Spleen (tissue), 13 donors: ENCODE measurements at regions of chr6 and their contacts with region 1.

Region 1: DNA sequence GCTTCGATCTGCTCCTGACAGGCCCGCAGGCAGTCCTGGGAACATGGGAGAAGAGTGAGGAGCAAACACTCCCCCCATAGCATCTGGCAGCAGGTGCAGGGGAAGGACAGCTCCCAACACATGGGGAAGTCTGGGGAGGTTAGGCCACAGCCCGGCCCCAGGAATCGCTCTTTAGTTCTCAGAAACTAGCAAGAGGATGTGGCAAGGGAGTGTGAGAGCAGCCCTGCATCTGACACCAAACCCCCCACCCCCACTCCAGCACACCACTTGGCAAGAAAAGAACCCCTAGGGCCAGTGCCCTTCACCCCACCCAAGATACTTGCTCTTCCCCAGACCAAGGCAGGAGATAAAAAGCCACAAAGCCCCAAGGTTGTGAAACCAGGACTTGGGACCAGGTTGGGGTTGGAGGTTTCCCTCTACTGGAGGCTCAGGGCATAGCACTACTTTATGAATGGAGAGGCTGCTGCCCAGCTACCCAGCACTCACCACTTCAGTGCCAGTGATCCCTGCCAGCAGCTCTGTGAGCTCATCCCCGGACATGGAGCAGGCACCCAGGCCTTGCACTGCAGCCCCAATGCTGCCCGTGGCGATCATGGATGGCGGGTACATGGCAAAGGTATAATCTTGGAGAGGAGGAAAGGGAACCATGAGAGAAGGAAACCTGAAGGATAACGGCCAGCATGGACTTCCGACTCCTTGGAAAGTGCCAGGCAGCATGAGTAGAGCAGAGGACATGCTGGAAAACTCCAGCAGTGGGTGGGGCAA is 5.4 kb downstream of the CCND3 start:
- DNase-seq: peak; percentile 86
- H3K4me3 ChIP-seq: peak overlapping the region in 3 of 8 donors; percentile 3 to 98 (median 9)
- H3K27ac ChIP-seq: peak overlapping the region; percentile 57 to 96 (median 91)
- H3K4me1 ChIP-seq: peaks cover 55 to 78% (median 71%) of the 10 kb centered on the region in 6 donors
- H3K27me3 ChIP-seq: no peaks in the 10 kb centered on the region
- CTCF ChIP-seq: peak; percentile 77 to 91 (median 84)
- POLR2A ChIP-seq: no peak

Region 2: DNA sequence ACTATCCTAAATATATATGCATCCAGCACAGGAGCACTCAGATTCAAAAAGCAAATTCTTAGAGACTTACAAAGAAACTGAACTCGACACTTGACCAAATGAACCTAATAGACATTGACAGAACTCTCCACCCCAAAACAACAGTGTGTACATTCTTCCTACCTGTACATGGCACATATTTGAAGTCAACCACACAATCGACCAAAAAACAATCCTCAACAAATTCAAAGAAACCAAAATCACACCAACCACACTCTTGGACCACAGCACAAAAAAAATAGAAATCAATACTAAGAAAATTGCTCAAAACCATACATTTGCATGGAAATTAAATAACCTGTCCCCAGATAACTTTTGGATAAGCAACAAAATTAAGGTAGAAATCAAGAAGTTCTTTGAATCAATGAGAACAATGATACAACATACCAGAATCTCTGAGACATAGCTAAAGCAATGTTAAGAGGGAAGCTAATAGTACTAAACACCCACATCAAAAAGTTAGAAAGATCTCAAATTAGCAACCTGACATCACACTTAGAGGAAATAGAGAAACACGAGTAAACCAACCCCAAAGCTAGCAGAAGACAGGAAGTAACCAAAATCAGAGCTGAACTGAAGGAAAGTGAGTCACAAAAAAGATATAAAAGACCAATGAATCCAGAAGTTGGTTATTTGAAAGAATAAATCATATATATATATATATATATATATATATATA is 637.3 kb before region 1 on chr6:
- intact Hi-C with region 1: no loop called
- DNase-seq: no peak
- H3K4me3 ChIP-seq: no peak overlapping the region
- H3K27ac ChIP-seq: peak overlapping the region in 6 of 8 donors; percentile 29 to 60 (median 47)
- H3K4me1 ChIP-seq: peaks cover 0 to 26% (median 8%) of the 10 kb centered on the region in 6 donors
- H3K27me3 ChIP-seq: no peaks in the 10 kb centered on the region
- CTCF ChIP-seq: no peak
- POLR2A ChIP-seq: no peak

Region 3: DNA sequence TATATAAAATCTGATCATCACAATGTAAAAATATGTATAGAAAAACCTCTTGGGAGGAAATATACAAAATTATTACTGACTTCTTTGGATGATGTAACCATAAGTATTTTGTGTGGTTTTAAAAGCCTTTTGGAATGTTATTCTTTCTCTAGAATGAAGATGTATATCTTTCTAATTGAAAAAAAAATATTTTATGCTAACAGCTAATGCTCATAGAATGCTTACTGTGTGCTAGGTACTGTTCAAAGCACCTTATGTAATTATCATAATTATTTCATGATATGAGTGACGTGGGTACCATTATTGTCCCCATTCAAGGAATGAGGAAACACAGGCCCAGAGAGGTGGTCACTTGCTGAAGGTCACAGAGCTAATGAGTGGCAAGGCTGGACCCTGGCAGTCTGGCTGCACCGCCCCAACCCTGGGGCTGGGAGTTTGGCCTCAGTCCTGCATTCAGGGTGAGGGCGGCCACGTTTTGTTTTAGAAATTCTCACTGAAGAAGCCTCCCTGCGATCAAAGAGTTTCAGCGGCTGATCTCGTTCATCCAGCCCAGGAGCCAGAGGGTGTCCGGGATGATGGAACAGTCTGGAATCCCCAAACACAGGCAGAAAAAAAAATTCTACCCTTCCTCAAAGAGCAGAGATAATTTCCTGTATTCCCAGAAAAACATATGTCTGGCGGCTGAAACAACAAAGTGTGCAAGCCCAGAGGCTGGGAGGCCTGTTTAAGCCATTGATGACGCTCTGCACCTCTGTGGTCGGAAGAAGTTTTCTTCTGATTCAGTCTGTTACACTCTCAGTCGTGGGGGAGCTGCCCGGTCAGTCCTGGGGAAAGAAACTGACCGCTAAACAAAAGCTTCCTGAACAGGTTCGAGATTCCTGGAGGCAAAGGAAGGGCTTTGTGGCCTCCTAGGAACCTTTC is 238.1 kb before region 1 on chr6:
- intact Hi-C with region 1: no loop called
- DNase-seq: no peak
- H3K4me3 ChIP-seq: no peak overlapping the region
- H3K27ac ChIP-seq: peak overlapping the region in 7 of 8 donors; percentile 29 to 75 (median 53)
- H3K4me1 ChIP-seq: peaks cover 14 to 94% (median 62%) of the 10 kb centered on the region in 6 donors
- H3K27me3 ChIP-seq: no peaks in the 10 kb centered on the region
- CTCF ChIP-seq: no peak
- POLR2A ChIP-seq: no peak

Region 4: GRCh38 chr6:42043787-42044475 is 107.7 kb after region 1 on chr6:
- intact Hi-C with region 1: loop called (anchors 5 kb)
- DNase-seq: peak; percentile 95
- H3K4me3 ChIP-seq: peak overlapping the region in 6 of 8 donors; percentile 9 to 98 (median 80)
- H3K27ac ChIP-seq: peak overlapping the region in 7 of 8 donors; percentile 87 to 96 (median 95)
- H3K4me1 ChIP-seq: peaks cover 61 to 97% (median 88%) of the 10 kb centered on the region in 6 donors
- H3K27me3 ChIP-seq: no peaks in the 10 kb centered on the region
- CTCF ChIP-seq: peak; percentile 95 to 99 (median 98)
- POLR2A ChIP-seq: no peak